ENCODE measurements at regions of chr16 and their contacts with region 1.

Region 1: DNA sequence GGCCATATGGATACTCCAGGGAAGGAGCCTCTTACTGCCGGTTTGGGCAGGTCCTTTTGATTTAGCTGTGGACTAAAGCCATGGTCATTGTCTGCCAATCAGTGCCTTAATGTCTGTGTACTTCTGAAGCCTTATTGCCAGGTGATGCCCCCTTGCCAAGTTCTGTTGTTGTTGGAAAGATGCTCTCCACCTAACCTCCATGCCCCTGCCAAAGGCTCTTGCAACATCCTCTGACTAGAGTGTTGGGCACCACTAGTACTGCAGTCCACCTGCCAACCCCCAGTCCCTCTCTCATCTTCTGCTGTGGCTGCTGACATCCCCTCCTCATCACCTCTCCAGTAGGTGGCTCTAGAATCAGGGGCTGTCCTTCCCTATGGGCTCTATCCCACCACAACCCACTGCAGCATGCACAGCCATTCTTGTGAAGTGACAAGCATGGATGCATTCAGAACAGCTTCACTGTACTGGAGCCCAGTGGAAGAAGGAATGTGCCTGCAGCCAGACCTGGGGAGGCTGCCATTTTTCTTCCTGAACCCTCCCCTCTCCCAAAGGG is 375.3 kb upstream of the CDH5 start:
- DNase-seq: no peak
- H3K4me3 ChIP-seq: no peak overlapping the region
- H3K27ac ChIP-seq: no peak overlapping the region
- H3K4me1 ChIP-seq: no peaks in the 10 kb centered on the region
- H3K27me3 ChIP-seq: no peaks in the 10 kb centered on the region
- CTCF ChIP-seq: no peak

Region 2: DNA sequence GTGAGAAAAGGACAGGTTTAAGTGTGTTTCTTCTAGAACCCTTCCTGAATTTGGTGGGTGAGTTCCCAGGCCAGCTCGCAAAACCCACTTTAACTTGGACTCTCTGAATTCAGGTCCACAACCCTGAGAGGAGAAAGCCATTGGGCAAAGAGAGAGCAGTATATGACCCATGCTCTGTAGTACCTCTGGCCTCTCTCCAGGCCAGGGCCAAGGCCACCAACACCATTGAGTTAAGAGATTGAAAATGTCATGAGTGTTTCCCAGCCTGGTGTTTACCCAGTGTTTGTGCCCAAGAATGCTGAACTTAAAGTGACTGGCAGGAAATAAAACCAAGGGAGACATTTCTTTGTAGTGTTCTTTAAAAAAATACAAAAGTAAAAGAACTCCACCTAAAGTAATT is 35.1 kb before region 1 on chr16:
- intact Hi-C with region 1: loop called (anchors 2 kb)
- DNase-seq: no peak
- H3K4me3 ChIP-seq: no peak overlapping the region
- H3K27ac ChIP-seq: no peak overlapping the region
- H3K4me1 ChIP-seq: no peaks in the 10 kb centered on the region
- H3K27me3 ChIP-seq: no peaks in the 10 kb centered on the region
- CTCF ChIP-seq: no peak

Region 3: DNA sequence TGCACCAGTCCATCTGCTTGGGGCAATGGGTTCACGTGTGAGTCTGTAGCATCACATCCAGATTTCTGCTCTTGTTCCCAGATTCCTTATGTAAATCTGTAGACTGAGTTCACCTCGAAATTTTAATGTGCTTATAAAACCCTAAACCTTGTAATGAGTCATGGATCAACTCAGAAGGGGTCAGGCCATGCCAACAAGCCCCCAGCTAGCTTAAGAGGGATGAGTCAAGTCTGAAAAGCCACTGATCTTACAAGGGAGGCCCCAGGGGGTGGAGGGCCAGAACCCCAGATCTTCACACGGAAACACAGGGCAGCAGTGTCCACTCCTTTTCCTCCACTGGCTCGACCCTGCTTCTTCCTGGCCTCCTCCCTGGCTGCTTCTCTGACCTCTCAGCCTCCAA is 23.8 kb before region 1 on chr16:
- intact Hi-C with region 1: no loop called
- DNase-seq: no peak
- H3K4me3 ChIP-seq: no peak overlapping the region
- H3K27ac ChIP-seq: no peak overlapping the region
- H3K4me1 ChIP-seq: no peaks in the 10 kb centered on the region
- H3K27me3 ChIP-seq: no peaks in the 10 kb centered on the region
- CTCF ChIP-seq: no peak